Left ventricle myocardium superior (tissue), 1 donor: ENCODE measurements at regions of chr6 and their contacts with region 1.

Region 1: DNA sequence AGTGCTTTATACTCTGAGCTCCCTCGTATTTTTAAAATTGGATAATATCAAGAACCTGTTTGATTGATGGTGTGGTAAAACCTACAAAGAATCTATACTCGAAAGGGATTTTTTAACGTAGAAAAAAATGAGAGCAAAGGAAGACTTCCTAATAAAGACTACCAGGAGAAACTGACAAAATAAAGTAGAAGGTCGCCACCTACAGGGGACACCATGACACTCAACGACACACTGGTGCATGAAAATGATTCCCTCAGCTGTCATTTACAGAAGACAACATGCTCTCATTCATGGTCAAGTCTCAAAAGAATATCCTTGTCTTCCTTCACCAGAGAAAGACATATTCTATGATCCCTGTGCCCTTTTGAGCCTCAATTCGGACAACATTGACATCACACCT is 10.1 kb upstream of the NHSL1 start:
- DNase-seq: no peak
- ATAC-seq: peak; percentile 78

Region 2: GRCh38 chr6:138440758-138441357 is 68.5 kb before region 1 on chr6:
- intact Hi-C with region 1: loop called (anchors 10 kb)
- DNase-seq: no peak
- ATAC-seq: peak; percentile 40